ENCODE measurements at regions of chr6 and their contacts with region 1.

Region 1: DNA sequence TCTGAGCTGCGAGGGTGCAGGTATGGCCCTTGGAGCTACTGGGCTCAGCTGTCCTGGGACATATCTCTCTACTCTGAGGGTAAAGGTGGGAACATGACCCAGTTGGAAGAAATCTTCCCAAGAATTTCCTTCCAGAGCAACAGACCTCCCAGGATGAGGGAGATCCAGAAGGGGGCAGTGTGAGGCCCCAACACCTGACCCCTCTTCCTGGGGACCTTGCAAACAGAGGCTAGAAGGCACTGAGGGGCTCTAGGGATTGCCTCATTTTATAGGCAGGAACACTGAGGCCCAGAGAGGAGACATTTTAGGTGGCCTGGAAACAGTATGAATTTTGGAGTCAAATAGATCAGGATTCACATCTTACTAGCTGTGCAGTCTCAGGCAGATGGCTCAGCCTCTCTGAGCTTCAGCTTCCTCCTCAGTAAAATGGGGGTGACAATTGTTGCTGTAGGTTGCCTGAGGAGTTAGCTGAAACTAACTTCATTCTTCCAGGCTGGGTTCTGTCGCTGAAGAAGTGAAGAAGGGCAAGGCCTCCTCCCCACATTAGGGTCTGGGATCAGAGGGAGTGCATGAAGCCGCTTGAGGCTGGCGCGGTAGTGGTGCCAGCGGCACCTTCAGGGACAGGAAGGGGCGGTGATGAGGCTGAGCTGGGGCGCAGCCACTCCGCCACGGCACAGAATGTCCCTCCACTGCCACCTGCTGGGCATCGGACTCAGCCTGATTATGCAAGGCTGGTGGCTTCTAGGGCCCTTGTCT is 11.4 kb downstream of the KCNK17 start:
- DNase-seq: no peak
- H3K4me3 ChIP-seq: no peak overlapping the region
- H3K27ac ChIP-seq: no peak overlapping the region
- H3K4me1 ChIP-seq: no peaks in the 10 kb centered on the region
- H3K27me3 ChIP-seq: no peaks in the 10 kb centered on the region
- CTCF ChIP-seq: peak; percentile 70 to 92 (median 85)
- POLR2A ChIP-seq: no peak

Region 2: GRCh38 chr6:39166189-39166911 is 136.5 kb before region 1 on chr6:
- intact Hi-C with region 1: loop called (anchors 5 kb)
- DNase-seq: no peak
- H3K4me3 ChIP-seq: no peak overlapping the region
- H3K27ac ChIP-seq: no peak overlapping the region
- H3K4me1 ChIP-seq: no peaks in the 10 kb centered on the region
- H3K27me3 ChIP-seq: no peaks in the 10 kb centered on the region
- CTCF ChIP-seq: peak; percentile 65 to 71 (median 69)
- POLR2A ChIP-seq: no peak

Region 3: GRCh38 chr6:39377539-39377950 is 74.7 kb after region 1 on chr6:
- intact Hi-C with region 1: no loop called
- DNase-seq: no peak
- H3K4me3 ChIP-seq: no peak overlapping the region
- H3K27ac ChIP-seq: no peak overlapping the region
- H3K4me1 ChIP-seq: peaks cover 4% of the 10 kb centered on the region
- H3K27me3 ChIP-seq: no peaks in the 10 kb centered on the region
- CTCF ChIP-seq: peak in 2 of 3 experiments; percentile 41 to 52
- POLR2A ChIP-seq: no peak